ENCODE measurements at regions of chr2 and their contacts with region 1.

Region 1: GRCh38 chr2:46555011-46555410 is 75.6 kb downstream of the TMEM247 start:
- DNase-seq: no peak
- H3K4me3 ChIP-seq: no peak overlapping the region
- H3K27ac ChIP-seq: peak overlapping the region in 1 of 4 donors; percentile 37
- H3K4me1 ChIP-seq: peaks cover 0 to 24% (median 13%) of the 10 kb centered on the region in 4 donors
- H3K27me3 ChIP-seq: no peaks in the 10 kb centered on the region
- CTCF ChIP-seq: peak in 3 of 5 experiments; percentile 12 to 19 (median 17)
- EP300 ChIP-seq: no peak
- POLR2A ChIP-seq: no peak

Region 2: DNA sequence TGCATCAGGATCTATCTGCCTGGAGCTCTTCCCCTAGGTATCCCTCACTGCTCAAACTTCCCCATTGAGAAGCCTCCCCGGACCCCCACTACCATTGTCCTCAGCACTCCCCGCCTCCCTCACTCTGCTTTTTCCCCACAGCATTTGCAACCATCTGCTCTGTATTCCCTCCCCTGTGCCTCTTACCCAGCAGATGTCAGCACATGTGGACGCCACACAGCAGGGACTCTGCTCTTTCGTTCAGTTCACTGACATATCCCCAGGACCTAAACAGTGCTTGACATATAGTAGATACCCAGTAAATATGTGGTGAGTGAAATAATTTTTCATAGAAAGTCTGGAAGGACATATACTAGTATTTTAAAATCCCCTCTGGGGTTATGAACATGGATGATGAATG is 25.4 kb after region 1 on chr2:
- in situ Hi-C with region 1: no loop called
- intact Hi-C with region 1: loop called (anchors 1 kb)
- DNase-seq: no peak
- H3K4me3 ChIP-seq: no peak overlapping the region
- H3K27ac ChIP-seq: no peak overlapping the region
- H3K4me1 ChIP-seq: peaks cover 0 to 2% (median 0%) of the 10 kb centered on the region in 4 donors
- H3K27me3 ChIP-seq: no peaks in the 10 kb centered on the region
- CTCF ChIP-seq: no peak
- EP300 ChIP-seq: no peak
- POLR2A ChIP-seq: no peak

Region 3: GRCh38 chr2:46621499-46621898 is 66.5 kb after region 1 on chr2:
- in situ Hi-C with region 1: no loop called
- intact Hi-C with region 1: no loop called
- DNase-seq: no peak
- H3K4me3 ChIP-seq: no peak overlapping the region
- H3K27ac ChIP-seq: no peak overlapping the region
- H3K4me1 ChIP-seq: peaks cover 8 to 21% (median 11%) of the 10 kb centered on the region in 4 donors
- H3K27me3 ChIP-seq: no peaks in the 10 kb centered on the region
- CTCF ChIP-seq: no peak
- EP300 ChIP-seq: no peak
- POLR2A ChIP-seq: no peak

Region 4: DNA sequence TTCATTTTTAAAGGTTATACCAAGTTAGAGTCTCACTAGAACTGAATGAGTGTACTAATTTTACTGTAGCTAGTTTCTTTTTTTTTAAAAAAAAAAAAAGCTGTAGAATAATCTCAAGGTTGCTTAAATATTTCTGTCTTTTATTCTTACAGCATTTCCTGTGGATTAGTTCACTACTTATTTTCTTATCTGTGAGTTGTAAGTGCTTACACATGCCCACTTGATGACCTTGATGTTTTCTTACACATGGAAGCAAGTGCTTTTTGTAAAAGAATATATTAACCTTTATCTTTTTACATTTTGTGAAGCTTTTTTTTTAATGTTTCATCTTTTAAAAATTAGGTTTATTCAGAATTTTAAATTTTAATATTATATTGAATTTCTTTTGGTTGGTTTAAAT is 905.8 kb after region 1 on chr2:
- in situ Hi-C with region 1: no loop called
- intact Hi-C with region 1: loop called (anchors 10 kb)
- DNase-seq: no peak
- H3K4me3 ChIP-seq: no peak overlapping the region
- H3K27ac ChIP-seq: no peak overlapping the region
- H3K4me1 ChIP-seq: no peaks in the 10 kb centered on the region
- H3K27me3 ChIP-seq: no peaks in the 10 kb centered on the region
- CTCF ChIP-seq: no peak
- EP300 ChIP-seq: no peak
- POLR2A ChIP-seq: no peak

Measured in transverse colon (tissue), 4 donors.